PC-3 (cell line): ENCODE measurements at regions of chr2 and their contacts with region 1.

Region 1: DNA sequence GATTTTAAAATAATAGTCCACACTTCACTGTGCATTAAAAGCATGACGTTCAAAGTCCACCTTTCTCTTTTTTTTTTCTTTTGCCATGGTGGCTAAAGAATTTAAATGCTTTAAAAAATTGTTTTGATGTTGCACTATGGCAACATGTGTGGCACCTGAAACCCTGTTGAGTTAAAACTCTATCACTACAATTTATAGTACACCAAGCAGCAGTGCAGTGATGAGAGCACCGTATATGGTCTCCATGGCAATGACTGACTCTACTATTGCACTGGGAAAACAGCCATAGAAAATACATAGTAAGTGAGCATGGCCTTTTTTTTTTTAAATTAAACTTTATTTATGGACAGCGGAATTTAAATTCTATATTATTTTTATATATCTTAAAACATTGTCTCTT is 298.8 kb downstream of the FIGN start:
- DNase-seq: no peak
- ATAC-seq: no peak
- H3K4me3 ChIP-seq: no peak overlapping the region
- H3K27ac ChIP-seq: no peak overlapping the region
- H3K4me1 ChIP-seq: no peaks in the 10 kb centered on the region
- H3K27me3 ChIP-seq: peaks cover 36% of the 10 kb centered on the region
- CTCF ChIP-seq: no peak

Region 2: GRCh38 chr2:162403884-162404283 is 1033.1 kb before region 1 on chr2:
- CTCF ChIA-PET with region 1: no interaction called
- POLR2A ChIA-PET with region 1: interaction called, 18 read pairs
- intact Hi-C with region 1: no loop called
- DNase-seq: peak; percentile 89
- ATAC-seq: peak; percentile 94
- H3K4me3 ChIP-seq: no peak overlapping the region
- H3K27ac ChIP-seq: no peak overlapping the region
- H3K4me1 ChIP-seq: peaks cover 7% of the 10 kb centered on the region; the same call in 1 of the 2 replicates
- H3K27me3 ChIP-seq: peaks cover 51% of the 10 kb centered on the region
- CTCF ChIP-seq: no peak

Region 3: GRCh38 chr2:163757804-163758203 is 320.8 kb after region 1 on chr2:
- CTCF ChIA-PET with region 1: no interaction called
- POLR2A ChIA-PET with region 1: no interaction called
- intact Hi-C with region 1: no loop called
- DNase-seq: no peak
- ATAC-seq: no peak
- H3K4me3 ChIP-seq: no peak overlapping the region
- H3K27ac ChIP-seq: no peak overlapping the region
- H3K4me1 ChIP-seq: no peaks in the 10 kb centered on the region
- H3K27me3 ChIP-seq: no peaks in the 10 kb centered on the region
- CTCF ChIP-seq: no peak